ENCODE measurements at regions of chr11 and their contacts with region 1.

Region 1: DNA sequence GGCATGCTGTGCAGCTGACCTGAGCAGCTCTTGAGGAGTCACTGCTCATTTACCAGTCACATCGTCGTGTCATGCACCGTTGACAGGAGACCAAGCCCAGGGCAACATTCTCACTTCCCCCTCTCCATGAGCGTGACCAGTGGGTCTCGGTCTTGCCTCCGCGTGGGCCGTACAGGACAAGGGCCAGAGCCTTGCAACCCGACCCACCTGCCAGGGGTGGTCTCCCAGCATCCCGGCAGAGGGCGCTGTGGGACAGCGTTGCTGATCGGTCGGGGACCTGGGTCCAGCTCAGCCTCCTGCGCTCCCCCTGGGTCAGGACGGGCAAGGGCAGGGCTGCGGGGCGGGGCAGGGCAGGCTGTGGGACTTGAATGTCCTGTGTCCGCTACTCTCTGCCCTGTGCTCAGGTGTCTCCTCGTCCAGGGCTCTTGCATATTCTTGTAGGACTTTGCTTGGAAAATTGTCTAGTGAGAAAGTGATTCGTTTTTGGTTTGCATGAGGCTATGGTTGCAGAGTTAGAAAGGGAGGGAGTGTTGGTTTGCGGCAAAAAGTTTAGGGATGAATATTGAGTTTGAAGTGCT is 16.2 kb downstream of the EIF4G2 start:
- DNase-seq: peak; percentile 89
- H3K4me3 Mint-ChIP-seq: no peak overlapping the region
- H3K27ac Mint-ChIP-seq: no peak overlapping the region
- H3K4me1 Mint-ChIP-seq: peaks cover 22% of the 10 kb centered on the region
- H3K27me3 Mint-ChIP-seq: peaks cover 3% of the 10 kb centered on the region

Region 2: GRCh38 chr11:9927670-9928069 is 864.8 kb before region 1 on chr11:
- CTCF ChIA-PET with region 1: no interaction called
- POLR2A ChIA-PET with region 1: no interaction called
- intact Hi-C with region 1: no loop called
- DNase-seq: no peak
- H3K4me3 Mint-ChIP-seq: no peak overlapping the region
- H3K27ac Mint-ChIP-seq: no peak overlapping the region
- H3K4me1 Mint-ChIP-seq: no peaks in the 10 kb centered on the region
- H3K27me3 Mint-ChIP-seq: no peaks in the 10 kb centered on the region

Region 3: DNA sequence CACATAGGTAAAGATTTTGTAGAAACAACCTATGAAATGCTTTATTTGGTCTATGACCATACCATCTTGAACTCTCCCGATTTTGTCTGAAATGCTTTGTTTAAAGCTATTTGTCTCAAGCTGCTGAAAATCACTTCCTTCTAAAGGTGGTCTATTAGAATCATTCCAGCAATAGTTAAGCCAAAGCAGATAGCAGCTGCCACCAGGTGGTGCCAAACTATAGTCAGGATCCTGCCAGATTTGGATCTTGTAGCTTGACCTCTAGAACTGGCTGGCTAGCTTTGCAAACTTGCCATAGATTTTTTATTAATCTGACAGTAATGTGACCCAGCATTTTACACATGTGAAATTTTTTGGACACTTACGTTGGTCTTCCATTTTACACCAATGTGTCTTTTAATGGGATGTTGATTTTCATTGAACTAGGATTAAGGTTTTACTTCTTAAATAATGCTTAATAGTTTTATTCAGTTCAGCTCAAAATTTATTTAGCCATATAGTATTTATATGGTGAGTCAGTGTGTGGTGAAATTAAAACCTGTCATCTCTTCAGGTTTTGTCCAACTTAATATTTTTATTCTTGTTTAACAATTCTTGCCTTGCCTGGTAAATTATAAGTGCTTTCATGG is 21.7 kb before region 1 on chr11:
- CTCF ChIA-PET with region 1: interaction called, 38 read pairs
- POLR2A ChIA-PET with region 1: no interaction called
- intact Hi-C with region 1: no loop called
- DNase-seq: peak; percentile 41
- H3K4me3 Mint-ChIP-seq: no peak overlapping the region
- H3K27ac Mint-ChIP-seq: no peak overlapping the region
- H3K4me1 Mint-ChIP-seq: no peaks in the 10 kb centered on the region
- H3K27me3 Mint-ChIP-seq: no peaks in the 10 kb centered on the region

Region 4: DNA sequence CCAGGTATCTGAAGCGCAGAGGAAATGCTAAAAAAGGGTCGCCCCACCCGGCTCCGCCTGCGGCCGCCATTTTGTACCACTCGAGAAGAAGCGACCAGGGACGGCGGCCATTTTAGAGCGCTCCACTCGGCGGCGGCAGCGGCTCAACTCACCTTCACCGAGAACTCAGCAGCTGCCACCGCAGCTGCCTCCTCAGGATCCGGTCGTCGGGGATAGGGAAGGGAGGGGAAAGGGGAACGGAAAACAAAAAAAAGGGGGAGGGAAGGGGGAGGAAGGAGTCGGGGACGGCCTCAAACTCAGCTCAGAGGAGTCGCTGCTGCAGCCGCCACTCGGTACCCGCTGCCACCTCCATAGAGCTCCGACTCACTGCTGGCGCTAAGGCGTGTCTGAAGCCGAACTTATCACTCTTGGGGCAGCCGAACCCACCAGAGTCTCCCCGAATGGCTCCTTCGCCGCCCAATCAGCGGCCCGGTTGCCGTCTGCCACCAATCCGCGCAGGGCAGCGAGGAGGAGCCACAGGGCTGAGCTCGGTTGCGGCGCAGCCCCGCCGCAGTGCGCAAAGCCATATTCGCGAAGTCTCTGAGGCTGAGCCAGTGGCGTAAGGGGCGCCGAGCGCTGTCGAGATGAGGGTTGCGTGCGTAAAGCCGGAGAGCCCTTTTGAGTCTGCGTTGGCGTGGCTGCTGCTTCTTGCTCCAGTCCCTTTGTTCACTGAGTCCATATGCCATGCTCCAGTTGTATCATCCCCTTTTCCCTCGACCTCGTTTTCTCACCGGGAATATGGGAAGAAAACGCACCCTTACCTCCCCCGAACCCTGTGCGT is 16.3 kb after region 1 on chr11 and contains the start of gene EIF4G2:
- CTCF ChIA-PET with region 1: interaction called, 50 read pairs
- POLR2A ChIA-PET with region 1: interaction called, 86 read pairs
- intact Hi-C with region 1: no loop called
- DNase-seq: peak; percentile 99
- H3K4me3 Mint-ChIP-seq: peak within 1 kb of the TSS; percentile 91
- H3K27ac Mint-ChIP-seq: peak within 1 kb of the TSS; percentile 98
- H3K4me1 Mint-ChIP-seq: peaks cover 46% of the 10 kb centered on the region
- H3K27me3 Mint-ChIP-seq: no peaks in the 10 kb centered on the region
- total RNA-seq, gene EIF4G2: 794 to 835 TPM

Region 5: DNA sequence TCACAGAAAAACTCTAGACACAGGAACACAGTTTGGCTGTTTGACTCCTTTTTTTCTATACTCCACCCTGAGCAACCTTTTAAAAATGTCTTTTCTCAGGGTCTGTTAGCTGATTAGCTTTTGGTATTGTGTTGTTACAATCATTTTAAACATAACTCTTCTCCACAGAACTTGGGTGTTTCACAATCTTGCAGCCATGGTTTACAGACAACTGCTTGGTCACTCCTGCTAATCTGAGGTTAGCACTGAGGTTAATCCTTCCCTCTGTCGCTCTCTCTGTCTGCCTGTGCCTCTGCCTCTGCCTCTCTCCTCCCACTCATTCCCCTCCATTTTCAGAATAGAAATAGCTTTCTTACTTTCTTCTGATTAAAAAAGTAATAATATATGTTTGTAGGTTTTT is 127.7 kb after region 1 on chr11:
- CTCF ChIA-PET with region 1: interaction called, 11 read pairs
- POLR2A ChIA-PET with region 1: interaction called, 3 read pairs
- intact Hi-C with region 1: no loop called
- DNase-seq: no peak
- H3K4me3 Mint-ChIP-seq: no peak overlapping the region
- H3K27ac Mint-ChIP-seq: no peak overlapping the region
- H3K4me1 Mint-ChIP-seq: no peaks in the 10 kb centered on the region
- H3K27me3 Mint-ChIP-seq: no peaks in the 10 kb centered on the region

Region 6: GRCh38 chr11:10933455-10934292 is 141.2 kb after region 1 on chr11:
- CTCF ChIA-PET with region 1: interaction called, 45 read pairs
- POLR2A ChIA-PET with region 1: interaction called, 4 read pairs
- intact Hi-C with region 1: loop called (anchors 2 kb)
- DNase-seq: peak; percentile 89
- H3K4me3 Mint-ChIP-seq: peak overlapping the region; percentile 68
- H3K27ac Mint-ChIP-seq: no peak overlapping the region
- H3K4me1 Mint-ChIP-seq: peaks cover 15% of the 10 kb centered on the region
- H3K27me3 Mint-ChIP-seq: peaks cover 22% of the 10 kb centered on the region

Region 7: DNA sequence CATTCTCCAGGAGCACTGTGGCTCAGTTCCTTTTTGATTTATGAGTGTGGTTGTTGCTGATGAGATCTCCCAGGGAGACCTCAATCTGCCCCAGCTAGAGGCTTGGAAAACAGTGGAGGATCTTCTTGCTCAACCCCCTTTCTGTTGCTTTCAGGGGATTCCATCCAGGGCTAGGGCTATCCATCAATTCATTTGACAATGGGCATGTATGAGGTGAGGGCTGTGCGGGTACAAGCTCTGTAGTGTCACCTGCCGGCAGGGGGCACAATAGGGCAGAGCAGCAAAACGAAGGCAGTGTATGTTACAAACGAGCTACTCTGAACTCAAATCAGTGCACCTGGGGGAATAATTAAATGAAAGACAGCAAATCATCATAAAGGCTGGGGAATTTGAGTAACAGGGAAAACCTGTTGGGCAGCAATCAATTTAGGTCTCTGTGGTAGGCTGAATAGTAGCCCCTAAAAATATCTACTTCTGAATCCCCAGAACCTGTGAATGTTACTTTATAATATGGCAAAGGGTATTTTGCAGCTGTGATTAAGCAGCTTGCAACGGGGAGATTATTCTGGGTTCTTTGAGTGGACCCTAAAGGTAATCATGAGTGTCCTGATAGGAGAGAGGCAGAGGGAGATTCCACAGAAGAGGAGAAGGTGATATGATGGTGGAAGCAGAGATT is 235.7 kb after region 1 on chr11:
- CTCF ChIA-PET with region 1: interaction called, 83 read pairs
- POLR2A ChIA-PET with region 1: no interaction called
- intact Hi-C with region 1: no loop called
- DNase-seq: peak; percentile 83
- H3K4me3 Mint-ChIP-seq: no peak overlapping the region
- H3K27ac Mint-ChIP-seq: no peak overlapping the region
- H3K4me1 Mint-ChIP-seq: no peaks in the 10 kb centered on the region
- H3K27me3 Mint-ChIP-seq: no peaks in the 10 kb centered on the region

Region 8: GRCh38 chr11:11787305-11788062 is 995.0 kb after region 1 on chr11:
- CTCF ChIA-PET with region 1: interaction called, 19 read pairs
- POLR2A ChIA-PET with region 1: no interaction called
- intact Hi-C with region 1: no loop called
- DNase-seq: peak; percentile 72
- H3K4me3 Mint-ChIP-seq: no peak overlapping the region
- H3K27ac Mint-ChIP-seq: no peak overlapping the region
- H3K4me1 Mint-ChIP-seq: no peaks in the 10 kb centered on the region
- H3K27me3 Mint-ChIP-seq: peaks cover 5% of the 10 kb centered on the region